ENCODE measurements at regions of chr5 and their contacts with region 1.

Region 1: GRCh38 chr5:97714424-97714823 is 531.4 kb upstream of the RIOK2 start:
- DNase-seq: no peak
- H3K4me3 ChIP-seq: no peak overlapping the region
- H3K27ac ChIP-seq: no peak overlapping the region
- H3K4me1 ChIP-seq: no peaks in the 10 kb centered on the region
- H3K27me3 ChIP-seq: no peaks in the 10 kb centered on the region
- CTCF ChIP-seq: no peak
- EP300 ChIP-seq: no peak
- POLR2A ChIP-seq: no peak

Region 2: GRCh38 chr5:97764700-97765099 is 50.3 kb after region 1 on chr5:
- intact Hi-C with region 1: loop called in 1 of 4 experiments (anchors 2 kb)
- DNase-seq: no peak
- H3K4me3 ChIP-seq: no peak overlapping the region
- H3K27ac ChIP-seq: no peak overlapping the region
- H3K4me1 ChIP-seq: no peaks in the 10 kb centered on the region
- H3K27me3 ChIP-seq: no peaks in the 10 kb centered on the region
- CTCF ChIP-seq: no peak
- EP300 ChIP-seq: no peak
- POLR2A ChIP-seq: no peak

Region 3: DNA sequence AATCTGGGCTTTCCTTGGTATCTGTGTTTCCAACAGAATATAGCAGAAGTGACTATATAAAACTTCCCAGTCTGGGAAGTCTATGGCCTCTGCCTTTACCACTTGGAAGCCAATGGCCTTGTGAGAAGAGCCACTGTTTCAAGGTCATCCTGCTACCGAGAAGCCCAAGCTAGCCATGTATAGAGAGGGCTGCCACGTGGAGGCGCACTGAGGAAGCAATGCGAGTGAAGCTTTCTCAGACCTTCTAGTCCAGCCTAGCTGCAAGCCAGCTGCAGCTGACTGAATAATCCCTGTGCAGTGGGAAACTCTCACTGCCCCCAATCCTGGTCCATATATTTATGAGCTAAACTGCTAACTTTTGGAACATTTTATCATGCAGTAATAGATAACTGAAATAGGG is 130.4 kb after region 1 on chr5:
- intact Hi-C with region 1: no loop called
- DNase-seq: no peak
- H3K4me3 ChIP-seq: no peak overlapping the region
- H3K27ac ChIP-seq: no peak overlapping the region
- H3K4me1 ChIP-seq: no peaks in the 10 kb centered on the region
- H3K27me3 ChIP-seq: no peaks in the 10 kb centered on the region
- CTCF ChIP-seq: no peak
- EP300 ChIP-seq: no peak
- POLR2A ChIP-seq: no peak

Region 4: GRCh38 chr5:99129768-99130501 is 1415.5 kb after region 1 on chr5:
- intact Hi-C with region 1: loop called in 1 of 4 experiments (anchors 5 kb)
- DNase-seq: no peak
- H3K4me3 ChIP-seq: no peak overlapping the region
- H3K27ac ChIP-seq: no peak overlapping the region
- H3K4me1 ChIP-seq: no peaks in the 10 kb centered on the region
- H3K27me3 ChIP-seq: no peaks in the 10 kb centered on the region
- CTCF ChIP-seq: no peak
- EP300 ChIP-seq: no peak
- POLR2A ChIP-seq: no peak